ENCODE measurements at regions of chr4 and their contacts with region 1.

Region 1: DNA sequence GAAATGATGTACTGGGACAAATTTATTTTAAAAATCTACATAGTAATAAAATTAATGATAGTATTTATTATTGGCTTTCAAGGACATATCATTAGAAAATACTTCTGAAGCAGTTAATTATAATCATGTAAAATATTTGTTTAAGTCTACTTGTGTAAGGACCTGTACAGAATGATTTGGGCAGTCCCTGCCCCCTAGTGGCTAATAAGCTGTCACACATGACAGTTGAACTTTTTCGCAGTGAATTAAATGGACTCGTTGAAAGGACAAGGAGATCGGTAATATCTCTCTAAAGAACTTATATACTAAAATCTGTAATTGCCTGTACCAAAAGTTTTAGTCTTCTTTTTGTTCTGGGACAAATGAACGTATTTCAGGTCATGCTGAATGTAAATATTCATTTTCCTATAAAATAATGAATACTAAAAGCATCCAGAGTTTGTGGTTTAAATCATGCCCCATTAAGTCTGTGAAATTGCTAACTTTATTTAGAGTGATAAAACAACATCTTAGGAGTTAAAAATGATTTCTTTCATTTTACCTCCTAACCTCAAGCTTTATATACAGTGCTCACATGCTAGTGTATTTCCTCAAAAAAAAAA is 13.6 kb downstream of the EXOC1 start:
- DNase-seq: peak in 1 of 2 experiments; percentile 41
- H3K4me3 ChIP-seq: no peak overlapping the region
- H3K4me3 Mint-ChIP-seq: no peak overlapping the region
- H3K27ac Mint-ChIP-seq: no peak overlapping the region
- H3K4me1 ChIP-seq: peaks cover 9% of the 10 kb centered on the region
- H3K4me1 Mint-ChIP-seq: peaks cover 10% of the 10 kb centered on the region
- H3K27me3 ChIP-seq: no peaks in the 10 kb centered on the region
- H3K27me3 Mint-ChIP-seq: no peaks in the 10 kb centered on the region
- CTCF ChIP-seq: peak; percentile 62 to 77

Region 2: DNA sequence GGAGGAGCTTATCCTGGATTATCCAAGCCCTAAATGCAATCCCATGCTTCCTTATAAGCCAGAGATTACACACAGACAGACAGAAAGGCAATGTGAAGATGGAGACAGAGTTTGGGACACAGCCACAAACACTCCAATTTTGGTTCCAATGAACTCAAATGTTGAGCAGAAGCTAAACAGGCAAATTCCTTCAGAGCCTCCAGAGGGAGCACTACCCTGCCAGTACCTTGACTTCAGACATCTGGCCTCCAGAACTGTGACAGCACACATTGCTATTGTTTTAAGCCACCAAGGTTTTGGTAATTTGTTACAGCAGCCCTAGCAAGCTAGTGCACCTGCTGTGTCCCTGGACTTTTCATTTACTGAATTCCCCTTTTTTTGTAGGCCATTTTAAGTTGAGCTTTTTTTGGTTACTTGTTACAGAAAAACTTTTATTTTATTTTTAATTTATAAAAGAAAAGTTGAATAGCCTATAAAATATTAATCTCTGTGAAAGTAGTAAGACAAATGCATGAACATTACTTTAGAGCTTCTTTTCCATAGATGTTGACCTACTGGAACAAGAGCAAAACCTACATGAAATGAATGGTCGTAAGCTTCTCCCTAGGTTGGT is 554.5 kb before region 1 on chr4:
- CTCF ChIA-PET with region 1: no interaction called
- POLR2A ChIA-PET with region 1: no interaction called
- intact Hi-C with region 1: loop called (anchors 1 kb)
- DNase-seq: peak; percentile 29 to 35
- H3K4me3 ChIP-seq: no peak overlapping the region
- H3K4me3 Mint-ChIP-seq: no peak overlapping the region
- H3K27ac Mint-ChIP-seq: no peak overlapping the region
- H3K4me1 ChIP-seq: no peaks in the 10 kb centered on the region
- H3K4me1 Mint-ChIP-seq: no peaks in the 10 kb centered on the region
- H3K27me3 ChIP-seq: no peaks in the 10 kb centered on the region
- H3K27me3 Mint-ChIP-seq: peaks cover 5% of the 10 kb centered on the region
- CTCF ChIP-seq: peak; percentile 38 to 65

Region 3: GRCh38 chr4:55444827-55445226 is 422.2 kb before region 1 on chr4:
- CTCF ChIA-PET with region 1: no interaction called
- POLR2A ChIA-PET with region 1: no interaction called
- intact Hi-C with region 1: loop called (anchors 1 kb)
- DNase-seq: peak in 1 of 2 experiments; percentile 26
- H3K4me3 ChIP-seq: no peak overlapping the region
- H3K4me3 Mint-ChIP-seq: no peak overlapping the region
- H3K27ac Mint-ChIP-seq: no peak overlapping the region
- H3K4me1 ChIP-seq: no peaks in the 10 kb centered on the region
- H3K4me1 Mint-ChIP-seq: no peaks in the 10 kb centered on the region
- H3K27me3 ChIP-seq: no peaks in the 10 kb centered on the region
- H3K27me3 Mint-ChIP-seq: no peaks in the 10 kb centered on the region
- CTCF ChIP-seq: peak in 1 of 2 experiments; percentile 53

Region 4: DNA sequence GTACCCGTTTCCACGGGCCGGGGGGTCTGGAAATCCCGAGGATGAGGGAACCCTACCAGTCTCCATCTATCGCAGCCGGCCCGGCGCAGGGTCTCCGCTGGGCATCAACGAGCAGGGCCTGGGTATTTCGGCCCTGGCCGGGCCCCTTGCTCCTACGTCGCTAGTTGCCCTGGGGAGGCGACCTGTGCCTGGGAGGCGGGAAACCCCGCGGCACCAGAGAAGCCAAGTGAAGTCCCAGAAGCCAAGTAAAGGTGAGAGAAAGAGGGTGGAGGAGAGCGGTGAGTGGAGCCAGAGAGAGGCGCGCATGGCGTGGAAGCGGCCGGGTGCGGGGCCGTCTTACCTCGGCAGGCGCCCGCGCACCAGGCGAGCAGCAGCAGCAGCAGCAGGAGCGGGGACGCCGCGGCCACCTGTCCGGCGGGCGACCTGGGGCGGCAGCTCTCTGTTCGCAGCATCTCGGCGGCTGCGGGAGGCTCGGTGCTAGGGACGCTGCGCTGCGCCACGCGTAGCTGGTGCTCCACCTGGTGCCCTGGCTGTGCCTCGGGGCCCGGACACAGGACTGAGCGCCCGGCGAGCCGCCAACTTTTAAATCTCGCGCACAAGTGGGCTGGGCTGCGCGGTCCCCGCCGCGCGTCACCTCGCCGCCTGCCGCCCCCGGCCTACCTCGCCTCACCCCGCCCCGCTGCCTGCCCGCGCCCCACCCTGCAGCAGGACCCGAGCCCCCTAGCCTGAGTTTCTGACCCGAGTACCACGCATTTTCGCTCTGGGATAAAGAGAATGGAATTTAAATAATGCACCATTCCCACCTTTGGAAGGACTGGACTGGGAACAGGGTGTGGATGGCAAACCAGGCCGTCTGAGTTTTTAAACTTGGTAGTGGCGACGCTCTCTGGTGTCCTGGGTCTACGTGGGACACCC is 231.1 kb before region 1 on chr4 and contains the start of gene NMU:
- CTCF ChIA-PET with region 1: no interaction called
- POLR2A ChIA-PET with region 1: no interaction called
- intact Hi-C with region 1: loop called (anchors 2 kb)
- DNase-seq: peak; percentile 45 to 60
- H3K4me3 ChIP-seq: peak within 1 kb of the TSS; percentile 33
- H3K4me3 Mint-ChIP-seq: peak within 1 kb of the TSS; percentile 76
- H3K27ac Mint-ChIP-seq: no peak within 1 kb of the TSS
- H3K4me1 ChIP-seq: no peaks in the 10 kb centered on the region
- H3K4me1 Mint-ChIP-seq: peaks cover 7% of the 10 kb centered on the region
- H3K27me3 ChIP-seq: peaks cover 3% of the 10 kb centered on the region
- H3K27me3 Mint-ChIP-seq: peaks cover 24% of the 10 kb centered on the region
- CTCF ChIP-seq: peak in 1 of 2 experiments; percentile 16
- total RNA-seq, gene NMU: not detected in 2 replicates

Region 5: DNA sequence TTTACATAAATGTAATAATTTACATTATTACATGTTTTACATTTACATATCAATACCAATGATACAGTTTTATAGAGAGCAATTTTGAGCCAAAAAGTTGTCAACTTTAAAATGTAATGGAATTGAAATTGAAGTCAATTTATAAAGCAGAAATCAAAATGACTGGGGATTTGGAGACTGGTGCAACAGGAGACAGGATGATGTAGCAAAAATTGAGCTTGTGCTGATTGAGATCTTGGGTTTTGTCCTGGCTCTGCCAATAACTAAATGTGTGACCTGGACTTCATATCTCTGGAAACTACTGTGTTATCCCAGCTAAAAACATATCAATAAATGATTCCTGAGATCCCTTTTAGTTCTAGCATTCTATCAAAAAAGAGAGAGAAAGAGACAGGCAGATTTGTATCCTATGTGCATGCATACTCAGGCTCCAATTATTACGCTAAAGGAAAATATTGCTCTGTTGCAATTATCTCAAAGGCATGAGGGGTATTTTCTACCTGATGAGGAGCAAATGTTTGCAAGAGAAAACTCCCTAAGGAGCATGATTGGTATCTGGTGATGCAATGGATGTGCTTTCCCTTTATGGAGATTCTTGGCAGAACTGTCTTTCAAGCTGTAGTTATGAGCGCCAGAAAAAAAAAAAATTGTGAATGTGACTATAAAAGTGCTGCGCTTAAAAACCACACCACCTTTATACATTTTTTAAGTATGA is 32.8 kb before region 1 on chr4:
- CTCF ChIA-PET with region 1: no interaction called
- POLR2A ChIA-PET with region 1: no interaction called
- intact Hi-C with region 1: no loop called
- DNase-seq: no peak
- H3K4me3 ChIP-seq: no peak overlapping the region
- H3K4me3 Mint-ChIP-seq: no peak overlapping the region
- H3K27ac Mint-ChIP-seq: no peak overlapping the region
- H3K4me1 ChIP-seq: no peaks in the 10 kb centered on the region
- H3K4me1 Mint-ChIP-seq: no peaks in the 10 kb centered on the region
- H3K27me3 ChIP-seq: no peaks in the 10 kb centered on the region
- H3K27me3 Mint-ChIP-seq: peaks cover 9% of the 10 kb centered on the region
- CTCF ChIP-seq: no peak

Region 6: DNA sequence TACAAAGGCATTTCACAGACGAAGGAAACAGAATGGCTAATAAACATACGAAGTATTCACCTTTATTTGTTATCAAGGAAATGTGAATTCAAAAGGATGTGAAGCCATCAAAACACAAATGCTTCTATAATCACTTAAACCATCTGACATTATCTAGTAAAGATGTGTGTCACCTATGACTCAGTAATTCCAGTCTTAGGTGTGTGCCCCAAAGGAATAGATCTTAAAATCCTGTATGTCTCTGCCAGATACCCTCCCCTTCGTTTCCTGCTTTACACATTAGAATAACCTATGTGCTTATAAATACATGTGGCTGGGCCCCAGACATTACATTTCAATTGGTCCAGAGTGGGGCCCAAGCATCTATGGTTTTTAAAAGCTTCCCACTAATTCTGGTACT is 39.9 kb after region 1 on chr4:
- CTCF ChIA-PET with region 1: no interaction called
- POLR2A ChIA-PET with region 1: no interaction called
- intact Hi-C with region 1: no loop called
- DNase-seq: no peak
- H3K4me3 ChIP-seq: no peak overlapping the region
- H3K4me3 Mint-ChIP-seq: no peak overlapping the region
- H3K27ac Mint-ChIP-seq: no peak overlapping the region
- H3K4me1 ChIP-seq: no peaks in the 10 kb centered on the region
- H3K4me1 Mint-ChIP-seq: no peaks in the 10 kb centered on the region
- H3K27me3 ChIP-seq: no peaks in the 10 kb centered on the region
- H3K27me3 Mint-ChIP-seq: no peaks in the 10 kb centered on the region
- CTCF ChIP-seq: no peak

Region 7: DNA sequence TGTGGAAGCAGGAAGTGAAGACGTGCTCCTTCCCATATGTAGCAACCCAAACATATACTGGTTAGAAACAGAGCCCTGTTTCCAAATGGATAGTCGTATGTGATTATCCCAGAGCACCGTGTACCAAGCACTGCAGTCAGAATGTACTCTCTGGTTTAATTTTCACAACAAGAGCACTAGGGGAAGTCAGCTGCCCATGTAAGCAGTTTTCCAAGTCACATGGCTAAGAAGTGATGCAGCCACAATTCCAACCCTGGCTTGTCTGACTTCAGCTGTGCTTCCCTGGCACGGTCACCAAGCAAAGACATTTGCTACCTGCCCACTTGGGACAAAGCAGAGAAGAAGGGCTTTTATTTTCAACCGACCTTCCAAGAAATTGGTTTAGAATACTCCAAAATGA is 53.5 kb after region 1 on chr4:
- CTCF ChIA-PET with region 1: no interaction called
- POLR2A ChIA-PET with region 1: no interaction called
- intact Hi-C with region 1: no loop called
- DNase-seq: no peak
- H3K4me3 ChIP-seq: no peak overlapping the region
- H3K4me3 Mint-ChIP-seq: no peak overlapping the region
- H3K27ac Mint-ChIP-seq: no peak overlapping the region
- H3K4me1 ChIP-seq: no peaks in the 10 kb centered on the region
- H3K4me1 Mint-ChIP-seq: no peaks in the 10 kb centered on the region
- H3K27me3 ChIP-seq: no peaks in the 10 kb centered on the region
- H3K27me3 Mint-ChIP-seq: no peaks in the 10 kb centered on the region
- CTCF ChIP-seq: no peak

Measured in Caco-2 (cell line).